ENCODE measurements at regions of chr2 and their contacts with region 1.

Region 1: GRCh38 chr2:109545828-109546713 is 67.7 kb downstream of the SEPTIN10 start:
- DNase-seq: peak; percentile 29 to 81
- H3K4me3 ChIP-seq: no peak overlapping the region
- H3K27ac ChIP-seq: no peak overlapping the region
- H3K4me1 ChIP-seq: no peaks in the 10 kb centered on the region
- H3K27me3 ChIP-seq: no peaks in the 10 kb centered on the region
- CTCF ChIP-seq: peak; percentile 82 to 90 (median 87)
- EP300 ChIP-seq: no peak
- POLR2A ChIP-seq: no peak
- RAD21 ChIP-seq: peak; percentile 92

Region 2: GRCh38 chr2:109475531-109476210 is 70.4 kb before region 1 on chr2:
- CTCF ChIA-PET with region 1: no interaction called
- POLR2A ChIA-PET with region 1: no interaction called
- DNase-seq: no peak
- H3K4me3 ChIP-seq: no peak overlapping the region
- H3K27ac ChIP-seq: no peak overlapping the region
- H3K4me1 ChIP-seq: no peaks in the 10 kb centered on the region
- H3K27me3 ChIP-seq: no peaks in the 10 kb centered on the region
- CTCF ChIP-seq: no peak
- EP300 ChIP-seq: no peak
- POLR2A ChIP-seq: no peak
- RAD21 ChIP-seq: no peak

Region 3: GRCh38 chr2:109486711-109487535 is 59.1 kb before region 1 on chr2:
- CTCF ChIA-PET with region 1: no interaction called
- POLR2A ChIA-PET with region 1: no interaction called
- DNase-seq: no peak
- H3K4me3 ChIP-seq: no peak overlapping the region
- H3K27ac ChIP-seq: no peak overlapping the region
- H3K4me1 ChIP-seq: no peaks in the 10 kb centered on the region
- H3K27me3 ChIP-seq: no peaks in the 10 kb centered on the region
- CTCF ChIP-seq: no peak
- EP300 ChIP-seq: no peak
- POLR2A ChIP-seq: no peak
- RAD21 ChIP-seq: no peak

Region 4: GRCh38 chr2:109523536-109524361 is 22.3 kb before region 1 on chr2:
- CTCF ChIA-PET with region 1: interaction called, 26 read pairs
- POLR2A ChIA-PET with region 1: interaction called, 3 read pairs
- DNase-seq: no peak
- H3K4me3 ChIP-seq: no peak overlapping the region
- H3K27ac ChIP-seq: no peak overlapping the region
- H3K4me1 ChIP-seq: no peaks in the 10 kb centered on the region
- H3K27me3 ChIP-seq: no peaks in the 10 kb centered on the region
- CTCF ChIP-seq: no peak
- EP300 ChIP-seq: no peak
- POLR2A ChIP-seq: no peak
- RAD21 ChIP-seq: no peak

Region 5: DNA sequence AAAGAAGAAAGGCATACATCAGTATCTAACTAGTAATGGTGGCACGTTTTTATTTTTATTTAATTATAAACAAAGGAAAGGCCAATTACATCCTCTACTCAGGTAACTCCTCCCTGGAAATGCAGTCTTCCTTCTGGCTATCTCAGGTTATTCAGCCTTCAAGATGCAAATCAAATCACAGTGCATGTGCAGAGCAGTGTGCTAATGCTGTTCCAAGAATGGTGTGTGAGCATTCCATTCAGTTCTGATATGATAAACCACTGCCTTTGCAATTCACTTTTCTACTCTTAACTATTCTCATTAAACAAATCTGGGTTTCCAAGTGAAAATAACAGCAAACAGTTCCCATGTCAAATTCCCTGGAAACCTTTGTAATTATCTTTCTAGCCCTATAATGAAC is 29.3 kb after region 1 on chr2:
- CTCF ChIA-PET with region 1: interaction called, 11 read pairs
- POLR2A ChIA-PET with region 1: no interaction called
- DNase-seq: no peak
- H3K4me3 ChIP-seq: no peak overlapping the region
- H3K27ac ChIP-seq: no peak overlapping the region
- H3K4me1 ChIP-seq: no peaks in the 10 kb centered on the region
- H3K27me3 ChIP-seq: no peaks in the 10 kb centered on the region
- CTCF ChIP-seq: no peak
- EP300 ChIP-seq: no peak
- POLR2A ChIP-seq: no peak
- RAD21 ChIP-seq: no peak

Region 6: GRCh38 chr2:109624339-109624738 is 78.3 kb after region 1 on chr2:
- CTCF ChIA-PET with region 1: interaction called, 15 read pairs
- POLR2A ChIA-PET with region 1: no interaction called
- DNase-seq: no peak
- H3K4me3 ChIP-seq: no peak overlapping the region
- H3K27ac ChIP-seq: no peak overlapping the region
- H3K4me1 ChIP-seq: no peaks in the 10 kb centered on the region
- H3K27me3 ChIP-seq: no peaks in the 10 kb centered on the region
- CTCF ChIP-seq: no peak
- EP300 ChIP-seq: no peak
- POLR2A ChIP-seq: no peak
- RAD21 ChIP-seq: no peak

Region 7: DNA sequence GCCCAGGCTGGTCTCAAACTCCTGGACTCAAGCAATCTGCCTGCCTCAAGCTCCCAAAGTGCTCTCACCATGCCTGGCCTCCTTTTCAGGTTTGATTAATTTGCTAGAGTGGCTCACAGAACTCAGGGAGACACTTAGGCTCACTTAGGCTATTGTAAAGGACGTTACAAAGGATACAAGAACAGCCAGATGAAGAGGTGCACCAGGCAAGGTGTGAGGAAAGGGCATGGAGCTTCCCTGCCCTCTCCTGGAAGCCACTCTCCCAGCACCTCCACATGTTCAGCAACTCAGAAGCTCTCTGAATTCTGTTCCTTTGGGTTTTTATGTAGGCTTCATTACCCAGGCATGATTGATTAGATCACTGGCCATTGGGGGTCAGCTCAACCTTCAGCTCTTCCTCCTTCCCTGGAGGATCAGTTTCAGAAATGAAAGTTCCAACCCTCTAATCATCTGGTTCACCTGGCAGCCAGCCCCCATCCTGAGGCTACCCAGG is 169.3 kb after region 1 on chr2:
- CTCF ChIA-PET with region 1: interaction called, 51 read pairs
- POLR2A ChIA-PET with region 1: no interaction called
- DNase-seq: no peak
- H3K4me3 ChIP-seq: no peak overlapping the region
- H3K27ac ChIP-seq: no peak overlapping the region
- H3K4me1 ChIP-seq: no peaks in the 10 kb centered on the region
- H3K27me3 ChIP-seq: no peaks in the 10 kb centered on the region
- CTCF ChIP-seq: peak; percentile 55 to 63 (median 60)
- EP300 ChIP-seq: no peak
- POLR2A ChIP-seq: no peak
- RAD21 ChIP-seq: peak; percentile 78 to 80